Astrocyte of the cerebellum (primary cell): ENCODE measurements at regions of chr5 and their contacts with region 1.

Region 1: GRCh38 chr5:26945881-26946280 is 92.5 kb downstream of the CDH9 start:
- DNase-seq: no peak
- H3K4me3 ChIP-seq: no peak overlapping the region
- CTCF ChIP-seq: no peak

Region 2: GRCh38 chr5:26078041-26078440 is 867.8 kb before region 1 on chr5:
- in situ Hi-C with region 1: no loop called
- DNase-seq: no peak
- H3K4me3 ChIP-seq: no peak overlapping the region
- CTCF ChIP-seq: no peak

Region 3: DNA sequence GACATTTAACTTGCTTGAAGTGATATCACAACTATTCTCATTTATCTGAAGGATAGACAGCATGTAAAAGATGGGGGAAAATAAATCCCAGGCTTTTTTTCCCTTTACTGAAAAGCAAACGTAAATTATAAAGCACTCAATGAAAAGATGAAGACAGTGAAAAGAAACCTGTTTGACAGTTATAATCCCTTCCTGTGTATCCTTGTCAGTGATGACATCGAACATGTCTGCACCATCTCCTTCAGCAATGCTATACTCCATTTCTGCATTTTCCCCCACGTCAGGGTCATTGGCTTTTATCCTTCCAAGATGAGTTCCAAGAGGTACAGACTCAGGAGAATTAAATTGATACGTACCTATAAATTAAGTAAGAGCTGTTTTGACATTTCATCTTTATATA is 42.4 kb before region 1 on chr5:
- in situ Hi-C with region 1: loop called (anchors 5 kb)
- DNase-seq: no peak
- H3K4me3 ChIP-seq: no peak overlapping the region
- CTCF ChIP-seq: no peak